Esophagus muscularis mucosa (tissue), 4 donors: ENCODE measurements at regions of chr19 and their contacts with region 1.

Region 1: DNA sequence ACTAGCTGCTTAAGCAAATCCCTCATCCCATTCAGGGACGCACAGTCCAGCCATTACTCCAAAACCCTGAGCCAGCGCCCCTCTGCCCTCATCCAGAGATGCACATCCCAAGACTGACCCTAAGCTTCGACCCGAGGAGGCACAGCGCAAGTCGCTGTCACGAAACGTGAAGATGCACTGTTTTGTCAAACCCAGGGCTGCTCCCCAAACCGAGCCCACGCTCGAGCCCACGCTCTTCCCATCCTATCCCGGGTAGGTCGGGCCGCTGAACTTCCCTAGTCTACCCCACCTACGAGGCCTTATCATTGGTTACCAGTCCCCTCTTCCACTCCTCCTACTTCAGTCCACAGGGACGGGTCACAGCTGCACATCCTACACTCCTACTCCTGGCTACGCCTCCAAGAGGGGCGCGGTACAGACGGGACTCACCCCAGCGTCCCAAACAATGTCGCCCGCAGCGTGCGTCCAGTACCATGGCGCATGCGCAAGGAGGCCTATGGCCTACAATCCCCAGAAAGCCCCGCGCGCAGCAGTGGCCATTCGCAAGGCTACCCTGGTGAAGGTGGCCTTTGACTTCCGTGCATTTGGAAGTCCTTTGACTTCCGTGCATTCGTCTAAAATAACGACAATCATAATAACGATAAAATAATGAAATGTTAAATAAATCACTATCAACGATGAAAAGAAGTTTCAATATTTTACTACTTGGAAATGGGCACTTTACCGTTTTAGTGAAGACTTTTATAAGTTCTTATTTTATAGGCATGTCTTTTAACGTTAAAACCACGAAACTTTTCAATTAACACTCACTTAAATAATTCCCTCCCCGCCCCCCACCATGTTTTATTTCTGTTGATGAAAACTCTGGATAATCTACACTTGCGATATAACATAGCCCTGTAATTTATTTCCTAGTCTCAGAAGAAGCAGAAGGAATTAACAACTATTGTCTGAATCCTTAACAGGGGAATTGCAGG is at the start of gene ZNF285:
- DNase-seq: peak; percentile 95
- H3K4me3 ChIP-seq: peak within 1 kb of the TSS; percentile 59 to 65 (median 64)
- H3K27ac ChIP-seq: peak within 1 kb of the TSS; percentile 30 to 68 (median 44)
- H3K4me1 ChIP-seq: peaks cover 3 to 8% (median 7%) of the 10 kb centered on the region in 4 donors
- H3K27me3 ChIP-seq: no peaks in the 10 kb centered on the region
- CTCF ChIP-seq: no peak
- EP300 ChIP-seq: no peak
- POLR2A ChIP-seq: no peak
- total RNA-seq, gene ZNF285: 3.0 to 6.3 (median 4.3) TPM

Region 2: GRCh38 chr19:44447916-44448674 is 46.7 kb after region 1 on chr19 and contains the start of gene ZNF229:
- intact Hi-C with region 1: loop called (anchors 5 kb)
- DNase-seq: peak; percentile 93
- H3K4me3 ChIP-seq: peak within 1 kb of the TSS; percentile 57 to 68 (median 67)
- H3K27ac ChIP-seq: peak within 1 kb of the TSS in 2 of 4 donors; percentile 43 to 62
- H3K4me1 ChIP-seq: peaks cover 8 to 17% (median 12%) of the 10 kb centered on the region in 4 donors
- H3K27me3 ChIP-seq: peaks cover 0 to 7% (median 0%) of the 10 kb centered on the region in 4 donors
- CTCF ChIP-seq: peak in 1 of 3 experiments; percentile 10
- EP300 ChIP-seq: no peak
- POLR2A ChIP-seq: no peak
- total RNA-seq, gene ZNF229: 4.1 to 7.2 (median 5.2) TPM